Transverse colon (tissue), 4 donors: ENCODE measurements at regions of chr3 and their contacts with region 1.

Region 1: GRCh38 chr3:150408221-150409102 is at the start of gene TSC22D2:
- DNase-seq: peak; percentile 98
- H3K4me3 ChIP-seq: peak within 1 kb of the TSS; percentile 60 to 92 (median 86)
- H3K27ac ChIP-seq: peak within 1 kb of the TSS; percentile 98 to 100 (median 100)
- H3K4me1 ChIP-seq: peaks cover 8 to 23% (median 17%) of the 10 kb centered on the region in 4 donors
- H3K27me3 ChIP-seq: no peaks in the 10 kb centered on the region
- CTCF ChIP-seq: peak in 3 of 5 experiments; percentile 26 to 44 (median 40)
- EP300 ChIP-seq: no peak
- POLR2A ChIP-seq: peak; percentile 98
- total RNA-seq, gene TSC22D2: 19.8 to 59.7 (median 29.5) TPM

Region 2: DNA sequence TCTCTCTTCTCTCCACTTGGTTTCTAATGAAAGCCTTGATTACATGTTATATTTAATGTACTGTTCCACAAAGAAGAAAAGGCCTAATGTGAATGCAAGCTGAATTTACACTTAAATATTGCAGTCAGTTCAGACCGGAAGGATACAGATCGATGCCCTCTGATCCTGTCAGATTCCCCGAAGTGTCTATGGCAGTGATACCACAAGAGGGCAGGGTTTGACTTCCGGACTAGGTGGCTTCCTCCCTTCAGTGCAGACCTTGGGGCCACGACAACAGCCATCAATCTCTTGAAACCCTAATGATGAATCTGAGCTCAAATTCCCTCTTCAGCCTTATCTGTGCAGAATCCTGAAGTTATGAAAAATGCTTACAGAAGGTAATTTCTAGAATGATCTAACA is 1681.2 kb before region 1 on chr3:
- in situ Hi-C with region 1: no loop called
- intact Hi-C with region 1: loop called (anchors 5 kb)
- DNase-seq: peak; percentile 18
- H3K4me3 ChIP-seq: no peak overlapping the region
- H3K27ac ChIP-seq: no peak overlapping the region
- H3K4me1 ChIP-seq: peaks cover 0 to 2% (median 0%) of the 10 kb centered on the region in 4 donors
- H3K27me3 ChIP-seq: no peaks in the 10 kb centered on the region
- CTCF ChIP-seq: peak; percentile 19 to 35 (median 32)
- EP300 ChIP-seq: no peak
- POLR2A ChIP-seq: no peak

Region 3: DNA sequence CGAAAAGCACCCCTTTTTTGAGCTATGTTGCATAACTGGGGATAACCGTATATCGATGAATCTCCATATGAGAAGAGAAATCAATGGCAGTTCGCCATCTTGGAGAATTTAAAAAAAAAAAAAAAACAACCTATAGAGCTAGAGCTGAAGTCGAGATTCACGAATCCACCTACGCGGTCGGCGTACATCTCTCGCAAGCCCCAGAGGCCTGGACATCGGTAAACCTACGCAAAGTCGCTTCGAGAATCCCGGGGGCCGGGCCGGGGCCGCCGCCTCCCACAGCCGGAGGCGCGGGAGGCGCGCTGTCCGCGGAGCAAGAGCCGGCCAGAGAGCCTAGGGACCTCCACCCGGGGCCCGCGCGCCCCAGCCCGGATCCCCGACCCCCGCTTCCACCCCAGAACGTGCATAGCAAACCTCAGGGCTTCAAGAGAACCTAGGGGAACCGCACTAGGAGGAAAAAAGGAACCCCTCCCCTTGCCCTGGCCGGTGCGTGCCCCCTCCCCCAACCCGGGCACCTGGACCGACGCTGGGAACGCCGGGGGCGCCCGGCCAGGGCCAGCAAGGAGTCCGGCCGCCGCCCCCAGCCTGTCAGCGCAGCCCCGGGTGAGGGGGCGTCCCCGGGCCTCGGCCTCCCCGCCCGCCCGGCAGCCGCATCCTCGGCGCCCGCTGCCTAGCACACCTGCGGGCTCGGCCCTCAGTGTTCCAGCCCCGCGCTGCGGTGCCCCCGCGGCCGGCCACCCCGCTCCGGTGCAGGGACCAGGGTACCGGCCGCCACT is 438.3 kb before region 1 on chr3:
- in situ Hi-C with region 1: loop called in 1 of 4 experiments (anchors 25 kb)
- intact Hi-C with region 1: no loop called
- DNase-seq: peak; percentile 92
- H3K4me3 ChIP-seq: peak overlapping the region; percentile 48 to 98 (median 92)
- H3K27ac ChIP-seq: peak overlapping the region; percentile 89 to 98 (median 94)
- H3K4me1 ChIP-seq: peaks cover 0 to 33% (median 22%) of the 10 kb centered on the region in 4 donors
- H3K27me3 ChIP-seq: peaks cover 3% of the 10 kb centered on the region
- CTCF ChIP-seq: no peak
- EP300 ChIP-seq: no peak
- POLR2A ChIP-seq: peak; percentile 7

Region 4: DNA sequence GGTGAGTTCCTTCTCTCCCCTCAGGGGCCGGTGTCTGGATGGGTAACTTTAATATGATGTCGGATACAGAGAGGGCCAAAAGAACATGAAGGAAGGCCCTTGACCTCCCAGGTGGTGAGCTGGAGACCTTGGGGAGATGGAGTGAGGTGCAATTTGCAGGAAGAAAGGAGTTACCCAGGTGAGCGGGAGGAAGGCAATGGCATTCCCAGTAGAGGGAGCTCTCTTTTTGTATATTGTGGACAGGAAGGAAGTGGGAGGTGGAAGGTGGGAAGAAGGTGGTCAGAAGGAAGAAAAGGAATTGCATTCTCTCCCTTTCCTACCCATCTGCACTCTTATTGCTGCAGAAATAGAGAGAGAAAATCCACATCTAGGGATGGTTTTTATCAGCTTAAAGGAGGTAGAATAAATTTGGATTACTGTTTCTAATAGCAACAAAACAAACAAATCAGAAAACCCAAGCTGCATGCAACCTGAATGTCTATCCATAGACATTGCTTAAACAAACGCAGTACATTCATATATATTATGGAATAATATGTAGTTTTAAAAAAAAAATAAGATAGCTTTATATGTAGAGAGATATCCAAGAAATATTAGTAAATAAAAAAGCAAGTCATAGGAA is 169.4 kb before region 1 on chr3:
- in situ Hi-C with region 1: no loop called
- intact Hi-C with region 1: loop called (anchors 5 kb)
- DNase-seq: peak; percentile 38
- H3K4me3 ChIP-seq: no peak overlapping the region
- H3K27ac ChIP-seq: peak overlapping the region in 1 of 4 donors; percentile 73
- H3K4me1 ChIP-seq: peaks cover 8 to 45% (median 29%) of the 10 kb centered on the region in 4 donors
- H3K27me3 ChIP-seq: no peaks in the 10 kb centered on the region
- CTCF ChIP-seq: peak; percentile 31 to 66 (median 52)
- EP300 ChIP-seq: no peak
- POLR2A ChIP-seq: no peak

Region 5: GRCh38 chr3:150371741-150372254 is 36.7 kb before region 1 on chr3:
- in situ Hi-C with region 1: no loop called
- intact Hi-C with region 1: loop called (anchors 5 kb)
- DNase-seq: peak; percentile 44
- H3K4me3 ChIP-seq: peak overlapping the region in 3 of 4 donors; percentile 26 to 43 (median 31)
- H3K27ac ChIP-seq: peak overlapping the region; percentile 79 to 85 (median 84)
- H3K4me1 ChIP-seq: peaks cover 0 to 39% (median 0%) of the 10 kb centered on the region in 4 donors
- H3K27me3 ChIP-seq: no peaks in the 10 kb centered on the region
- CTCF ChIP-seq: no peak
- EP300 ChIP-seq: peak; percentile 23
- POLR2A ChIP-seq: peak; percentile 78

Region 6: DNA sequence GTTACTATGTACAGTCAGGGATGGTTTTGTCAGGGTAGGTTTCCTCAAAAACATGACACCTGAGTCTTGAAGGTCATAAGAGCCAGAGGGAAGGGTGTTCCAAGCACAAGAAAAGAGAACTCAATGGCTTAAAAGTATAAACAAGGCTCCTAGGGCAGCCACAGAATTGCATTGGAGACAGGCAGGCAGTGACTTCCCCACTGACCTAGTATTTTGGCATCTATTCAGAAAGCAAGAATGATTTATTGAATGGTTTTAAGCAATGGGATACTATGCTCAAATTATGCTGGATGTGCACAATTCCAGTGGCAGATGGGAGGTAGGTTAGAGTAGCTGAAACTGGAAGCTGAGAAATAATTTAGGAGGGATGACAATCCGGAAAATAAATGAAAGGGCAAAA is 53.6 kb after region 1 on chr3:
- in situ Hi-C with region 1: no loop called
- intact Hi-C with region 1: no loop called
- DNase-seq: no peak
- H3K4me3 ChIP-seq: no peak overlapping the region
- H3K27ac ChIP-seq: no peak overlapping the region
- H3K4me1 ChIP-seq: no peaks in the 10 kb centered on the region
- H3K27me3 ChIP-seq: no peaks in the 10 kb centered on the region
- CTCF ChIP-seq: no peak
- EP300 ChIP-seq: no peak
- POLR2A ChIP-seq: no peak

Region 7: GRCh38 chr3:152309535-152310307 is 1901.3 kb after region 1 on chr3:
- in situ Hi-C with region 1: no loop called
- intact Hi-C with region 1: no loop called
- DNase-seq: no peak
- H3K4me3 ChIP-seq: no peak overlapping the region
- H3K27ac ChIP-seq: peak overlapping the region; percentile 88 to 91 (median 90)
- H3K4me1 ChIP-seq: peaks cover 36 to 79% (median 64%) of the 10 kb centered on the region in 4 donors
- H3K27me3 ChIP-seq: no peaks in the 10 kb centered on the region
- CTCF ChIP-seq: no peak
- EP300 ChIP-seq: no peak
- POLR2A ChIP-seq: no peak